ENCODE measurements at regions of chr1 and their contacts with region 1.

Region 1: GRCh38 chr1:214328770-214329469 is 48.0 kb downstream of the SMYD2 start:
- DNase-seq: peak; percentile 64 to 89
- ATAC-seq: peak; percentile 90 to 96 (median 96)
- H3K4me3 ChIP-seq: no peak overlapping the region
- H3K4me3 Mint-ChIP-seq: no peak overlapping the region
- H3K27ac ChIP-seq: no peak overlapping the region
- H3K27ac Mint-ChIP-seq: no peak overlapping the region
- H3K4me1 ChIP-seq: no peaks in the 10 kb centered on the region
- H3K4me1 Mint-ChIP-seq: peaks cover 0 to 4% of the 10 kb centered on the region in 2 donors
- H3K27me3 ChIP-seq: no peaks in the 10 kb centered on the region
- H3K27me3 Mint-ChIP-seq: no peaks in the 10 kb centered on the region
- CTCF ChIP-seq: peak; percentile 80

Region 2: DNA sequence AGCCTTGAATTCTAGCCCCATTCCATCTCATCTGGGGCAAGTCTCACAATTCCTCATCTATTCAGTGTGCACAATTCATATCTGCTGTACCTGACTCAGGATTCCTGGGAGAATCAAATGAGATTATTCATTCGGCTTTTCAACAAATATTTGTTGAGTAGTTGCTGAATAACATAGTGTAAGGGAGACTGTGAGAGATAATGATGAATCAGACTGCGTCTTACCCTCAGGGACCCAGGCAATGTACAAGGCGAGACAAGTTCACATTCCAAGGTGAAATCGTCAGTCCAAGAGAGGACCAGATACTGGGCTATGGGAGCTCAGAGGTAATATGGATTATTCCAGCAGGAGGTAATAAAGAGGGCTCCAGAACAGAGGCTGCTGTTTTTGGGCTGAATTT is 115.8 kb before region 1 on chr1:
- intact Hi-C with region 1: loop called (anchors 1 kb)
- DNase-seq: no peak
- ATAC-seq: no peak
- H3K4me3 ChIP-seq: no peak overlapping the region
- H3K4me3 Mint-ChIP-seq: no peak overlapping the region
- H3K27ac ChIP-seq: no peak overlapping the region
- H3K27ac Mint-ChIP-seq: no peak overlapping the region
- H3K4me1 ChIP-seq: no peaks in the 10 kb centered on the region
- H3K4me1 Mint-ChIP-seq: peaks cover 0 to 5% of the 10 kb centered on the region in 2 donors
- H3K27me3 ChIP-seq: peaks cover 5% of the 10 kb centered on the region
- H3K27me3 Mint-ChIP-seq: peaks cover 19 to 22% of the 10 kb centered on the region in 2 donors
- CTCF ChIP-seq: no peak

Region 3: DNA sequence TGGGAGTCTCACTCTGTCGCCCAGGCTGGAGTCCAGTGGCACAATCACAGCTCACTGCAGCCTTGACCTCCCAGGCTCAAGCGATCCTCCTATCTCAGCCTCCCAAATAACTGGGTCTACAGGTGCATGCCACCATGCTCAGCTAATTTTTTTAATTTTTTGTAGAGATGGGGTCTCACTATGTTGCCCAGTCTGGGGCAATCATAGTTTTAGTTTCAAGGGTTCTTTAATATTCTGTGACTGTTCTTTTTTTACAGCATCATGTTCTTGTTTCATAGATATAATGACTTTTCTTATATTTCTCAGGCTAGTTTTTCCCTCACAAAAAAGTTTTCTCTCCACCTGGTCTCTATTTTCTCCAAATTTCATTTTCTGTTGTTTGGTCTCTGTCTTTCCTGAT is 73.4 kb before region 1 on chr1:
- intact Hi-C with region 1: no loop called
- DNase-seq: no peak
- ATAC-seq: no peak
- H3K4me3 ChIP-seq: no peak overlapping the region
- H3K4me3 Mint-ChIP-seq: no peak overlapping the region
- H3K27ac ChIP-seq: no peak overlapping the region
- H3K27ac Mint-ChIP-seq: no peak overlapping the region
- H3K4me1 ChIP-seq: no peaks in the 10 kb centered on the region
- H3K4me1 Mint-ChIP-seq: no peaks in the 10 kb centered on the region
- H3K27me3 ChIP-seq: peaks cover 5% of the 10 kb centered on the region
- H3K27me3 Mint-ChIP-seq: peaks cover 35 to 54% of the 10 kb centered on the region in 2 donors
- CTCF ChIP-seq: no peak

Region 4: GRCh38 chr1:214439352-214440119 is 110.6 kb after region 1 on chr1:
- intact Hi-C with region 1: loop called (anchors 10 kb)
- DNase-seq: peak in 1 of 2 donors; percentile 26
- ATAC-seq: peak; percentile 43 to 75 (median 74)
- H3K4me3 ChIP-seq: peak overlapping the region; percentile 1
- H3K4me3 Mint-ChIP-seq: peak overlapping the region; percentile 69
- H3K27ac ChIP-seq: no peak overlapping the region
- H3K27ac Mint-ChIP-seq: peak overlapping the region; percentile 32 to 56
- H3K4me1 ChIP-seq: no peaks in the 10 kb centered on the region
- H3K4me1 Mint-ChIP-seq: peaks cover 28 to 36% of the 10 kb centered on the region in 2 donors
- H3K27me3 ChIP-seq: no peaks in the 10 kb centered on the region
- H3K27me3 Mint-ChIP-seq: peaks cover 0 to 8% of the 10 kb centered on the region in 2 donors
- CTCF ChIP-seq: no peak

Region 5: DNA sequence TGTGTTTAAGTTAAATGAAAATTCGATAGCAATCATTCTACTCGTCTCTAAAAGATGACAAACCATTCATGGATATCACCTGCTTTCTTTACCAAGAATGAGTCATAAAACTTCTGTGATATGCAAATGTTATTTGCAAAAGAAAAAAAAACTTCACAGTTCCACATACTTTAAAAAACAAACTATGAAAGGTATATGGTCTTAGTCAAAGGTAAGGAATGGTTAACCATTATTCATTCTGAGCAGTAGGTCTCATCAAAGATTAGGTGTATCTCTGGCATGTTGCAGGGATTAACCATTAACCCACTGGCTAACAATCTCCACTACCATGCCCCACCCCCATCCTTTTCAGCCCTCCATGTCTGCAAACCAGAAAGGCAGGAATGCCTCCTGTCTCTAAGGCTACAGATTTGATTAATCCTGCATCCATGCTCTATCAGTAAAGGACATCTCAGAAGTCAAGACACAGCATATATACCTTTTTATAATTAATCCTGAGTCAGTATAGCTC is 178.1 kb after region 1 on chr1:
- intact Hi-C with region 1: no loop called
- DNase-seq: no peak
- ATAC-seq: no peak
- H3K4me3 ChIP-seq: no peak overlapping the region
- H3K4me3 Mint-ChIP-seq: no peak overlapping the region
- H3K27ac ChIP-seq: no peak overlapping the region
- H3K27ac Mint-ChIP-seq: no peak overlapping the region
- H3K4me1 ChIP-seq: no peaks in the 10 kb centered on the region
- H3K4me1 Mint-ChIP-seq: no peaks in the 10 kb centered on the region
- H3K27me3 ChIP-seq: no peaks in the 10 kb centered on the region
- H3K27me3 Mint-ChIP-seq: peaks cover 17 to 19% of the 10 kb centered on the region in 2 donors
- CTCF ChIP-seq: no peak

Region 6: DNA sequence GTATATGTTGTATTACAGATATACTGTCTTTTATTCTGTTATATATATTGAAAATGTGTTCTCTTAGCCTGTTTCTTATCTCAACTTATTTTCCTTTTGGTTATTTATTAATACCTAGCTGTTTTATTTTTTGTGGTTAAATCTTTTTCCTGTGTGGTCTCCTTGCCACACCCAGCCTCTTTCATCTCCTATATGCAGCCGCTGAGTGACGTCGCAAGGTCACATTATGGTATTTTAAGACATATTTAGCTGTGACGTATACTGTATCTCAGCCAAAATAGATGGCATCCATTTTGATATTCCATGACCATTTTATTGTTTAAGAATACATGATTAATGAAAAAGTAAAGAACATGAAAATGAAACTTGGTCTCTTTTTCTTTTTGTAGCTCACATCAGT is 303.2 kb after region 1 on chr1:
- intact Hi-C with region 1: loop called (anchors 2 kb)
- DNase-seq: peak in 1 of 2 donors; percentile 80
- ATAC-seq: no peak
- H3K4me3 ChIP-seq: no peak overlapping the region
- H3K4me3 Mint-ChIP-seq: no peak overlapping the region
- H3K27ac ChIP-seq: no peak overlapping the region
- H3K27ac Mint-ChIP-seq: peak overlapping the region in 1 of 2 donors; percentile 32
- H3K4me1 ChIP-seq: no peaks in the 10 kb centered on the region
- H3K4me1 Mint-ChIP-seq: peaks cover 7 to 8% of the 10 kb centered on the region in 2 donors
- H3K27me3 ChIP-seq: no peaks in the 10 kb centered on the region
- H3K27me3 Mint-ChIP-seq: no peaks in the 10 kb centered on the region
- CTCF ChIP-seq: no peak

Measured in natural killer cell (primary cell).